Activated naive CD4-positive, alpha-beta T cell treated with anti-CD3 and anti-CD28 coated beads for 36 hours (primary cell): ENCODE measurements at regions of chr2 and their contacts with region 1.

Region 1: GRCh38 chr2:197838036-197838435 is 33.6 kb downstream of the PLCL1 start:
- DNase-seq: peak; percentile 48
- H3K4me3 Mint-ChIP-seq: peak overlapping the region; percentile 56
- H3K27ac Mint-ChIP-seq: peak overlapping the region; percentile 63
- H3K4me1 Mint-ChIP-seq: peaks cover 59% of the 10 kb centered on the region
- H3K27me3 Mint-ChIP-seq: no peaks in the 10 kb centered on the region

Region 2: GRCh38 chr2:197786010-197786877 is 51.8 kb before region 1 on chr2:
- CTCF ChIA-PET with region 1: no interaction called
- intact Hi-C with region 1: no loop called
- DNase-seq: peak; percentile 70
- H3K4me3 Mint-ChIP-seq: peak overlapping the region; percentile 67
- H3K27ac Mint-ChIP-seq: no peak overlapping the region
- H3K4me1 Mint-ChIP-seq: peaks cover 2% of the 10 kb centered on the region
- H3K27me3 Mint-ChIP-seq: peaks cover 9% of the 10 kb centered on the region

Region 3: DNA sequence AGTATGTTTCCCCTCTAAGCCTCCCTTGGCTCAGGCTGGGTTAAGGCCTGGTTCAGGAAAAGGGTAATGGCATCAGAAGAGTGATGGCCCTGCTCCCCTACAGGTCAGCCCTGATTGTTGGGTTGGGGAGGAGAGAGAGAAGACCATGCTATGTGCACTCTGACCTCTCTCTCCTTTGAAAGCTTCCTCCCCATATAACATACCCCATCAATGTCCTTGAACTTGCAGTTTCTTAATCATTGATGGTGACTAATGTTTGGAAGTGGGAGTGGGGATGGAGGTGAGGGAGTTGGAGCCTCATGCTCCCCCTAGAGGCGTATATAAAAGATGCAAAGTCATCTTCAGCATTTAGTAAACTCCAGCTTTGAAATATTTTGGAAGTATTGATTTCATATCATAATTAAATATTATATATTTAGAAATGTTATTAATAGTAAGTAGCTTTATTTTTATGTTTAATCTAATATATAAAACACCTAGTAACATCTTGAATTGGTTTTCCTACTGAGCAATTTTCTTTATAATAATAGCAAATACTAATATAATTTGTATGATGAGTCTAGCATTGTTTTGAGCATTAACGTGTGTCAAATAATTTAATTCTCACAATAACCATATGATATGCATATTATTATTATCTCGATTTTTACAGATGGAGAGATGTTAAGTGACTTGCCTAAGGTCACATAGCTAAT is 24.8 kb before region 1 on chr2:
- CTCF ChIA-PET with region 1: interaction called, 19 read pairs
- intact Hi-C with region 1: loop called (anchors 1 kb)
- DNase-seq: no peak
- H3K4me3 Mint-ChIP-seq: no peak overlapping the region
- H3K27ac Mint-ChIP-seq: no peak overlapping the region
- H3K4me1 Mint-ChIP-seq: peaks cover 57% of the 10 kb centered on the region
- H3K27me3 Mint-ChIP-seq: no peaks in the 10 kb centered on the region

Region 4: GRCh38 chr2:197821550-197822289 is 16.3 kb before region 1 on chr2:
- CTCF ChIA-PET with region 1: interaction called, 7 read pairs
- intact Hi-C with region 1: loop called (anchors 1 kb)
- DNase-seq: no peak
- H3K4me3 Mint-ChIP-seq: no peak overlapping the region
- H3K27ac Mint-ChIP-seq: no peak overlapping the region
- H3K4me1 Mint-ChIP-seq: peaks cover 47% of the 10 kb centered on the region
- H3K27me3 Mint-ChIP-seq: no peaks in the 10 kb centered on the region

Region 5: GRCh38 chr2:197873293-197873701 is 35.3 kb after region 1 on chr2:
- CTCF ChIA-PET with region 1: no interaction called
- intact Hi-C with region 1: loop called (anchors 1 kb)
- DNase-seq: no peak
- H3K4me3 Mint-ChIP-seq: no peak overlapping the region
- H3K27ac Mint-ChIP-seq: no peak overlapping the region
- H3K4me1 Mint-ChIP-seq: peaks cover 65% of the 10 kb centered on the region
- H3K27me3 Mint-ChIP-seq: no peaks in the 10 kb centered on the region

Region 6: DNA sequence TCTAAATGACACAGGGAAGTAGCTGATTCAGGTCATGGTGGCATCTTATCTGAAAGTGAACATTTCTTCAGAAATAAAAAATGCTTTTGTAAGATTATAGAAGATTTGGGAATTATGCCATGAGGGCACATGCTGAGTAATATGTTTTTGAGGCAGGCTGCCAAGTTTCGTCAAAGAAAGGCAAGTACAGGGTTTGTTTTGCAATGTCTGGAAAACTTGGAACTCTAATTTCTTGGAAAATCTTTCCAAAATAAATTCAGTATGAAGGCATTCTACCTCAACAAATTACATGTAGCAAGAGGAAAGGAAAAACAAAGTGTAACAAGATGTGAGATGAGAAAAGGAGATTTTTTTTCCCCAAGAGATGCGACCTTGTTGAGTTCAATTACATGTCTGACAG is 134.0 kb after region 1 on chr2:
- CTCF ChIA-PET with region 1: no interaction called
- intact Hi-C with region 1: loop called (anchors 1 kb)
- DNase-seq: no peak
- H3K4me3 Mint-ChIP-seq: no peak overlapping the region
- H3K27ac Mint-ChIP-seq: no peak overlapping the region
- H3K4me1 Mint-ChIP-seq: peaks cover 43% of the 10 kb centered on the region
- H3K27me3 Mint-ChIP-seq: no peaks in the 10 kb centered on the region

Region 7: DNA sequence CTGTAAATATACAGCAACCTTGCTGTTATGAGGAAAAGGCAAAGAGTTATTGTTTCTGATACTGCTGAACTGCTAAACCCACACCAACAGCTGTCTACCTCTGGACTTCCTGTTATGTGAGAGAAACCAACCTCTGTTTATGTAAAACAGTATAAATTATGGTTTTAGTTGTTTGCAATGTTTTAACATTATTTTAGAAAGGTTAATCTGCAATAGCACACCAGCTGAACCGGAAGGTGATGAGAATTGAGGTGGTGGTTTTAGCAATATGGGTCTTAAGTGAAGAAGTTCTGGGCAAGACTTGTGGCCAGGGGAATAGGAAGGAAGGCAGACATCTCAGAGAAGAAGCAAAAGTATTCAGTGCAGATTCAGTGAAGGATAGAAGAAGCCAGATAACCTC is 204.2 kb after region 1 on chr2:
- CTCF ChIA-PET with region 1: no interaction called
- intact Hi-C with region 1: loop called (anchors 1 kb)
- DNase-seq: no peak
- H3K4me3 Mint-ChIP-seq: no peak overlapping the region
- H3K27ac Mint-ChIP-seq: no peak overlapping the region
- H3K4me1 Mint-ChIP-seq: peaks cover 15% of the 10 kb centered on the region
- H3K27me3 Mint-ChIP-seq: no peaks in the 10 kb centered on the region